Gastrocnemius medialis (tissue), 4 donors: ENCODE measurements at regions of chr11 and their contacts with region 1.

Region 1: DNA sequence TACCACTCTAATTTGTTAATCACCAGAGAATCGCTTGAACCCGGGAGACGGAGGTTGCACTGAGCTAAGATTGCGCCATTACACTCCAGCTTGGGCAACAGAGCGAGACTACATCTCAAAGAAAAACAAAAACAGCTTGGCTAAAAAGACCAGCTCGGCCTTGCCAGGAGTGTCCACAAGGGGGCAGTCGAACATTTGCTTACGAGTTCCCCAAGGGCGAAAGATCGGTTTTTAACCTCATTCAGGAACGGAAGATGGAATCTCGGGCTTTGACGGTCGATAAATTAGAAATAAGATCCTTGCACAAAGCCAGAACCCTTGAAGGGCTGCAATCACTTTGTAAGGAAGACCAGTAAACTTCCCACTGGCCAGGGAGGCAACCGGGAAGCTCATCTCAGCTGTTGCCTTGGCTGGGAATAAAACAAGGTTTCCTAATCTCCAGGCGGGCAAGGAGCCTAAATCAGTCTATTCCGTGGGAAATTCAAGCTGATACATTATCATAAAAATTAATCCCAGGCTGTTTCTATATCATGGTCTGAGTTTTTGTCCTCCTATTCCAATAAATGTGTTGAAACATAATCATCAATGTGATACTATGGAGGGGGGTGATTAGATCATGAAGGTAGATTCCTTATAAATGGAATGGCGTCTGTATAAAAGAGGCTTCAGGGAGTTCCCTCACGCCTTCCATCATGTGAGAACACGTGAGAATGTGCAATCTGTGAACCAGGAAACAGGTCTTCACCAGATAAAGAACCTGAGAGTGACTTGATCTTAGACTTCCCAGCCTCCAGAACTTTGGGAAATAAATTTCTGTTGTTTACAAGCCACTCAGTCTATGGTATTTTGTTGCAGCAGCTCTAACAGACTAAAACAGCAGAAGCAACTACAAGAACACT is 14.9 kb upstream of the SLC29A2 start:
- DNase-seq: peak; percentile 71 to 90
- ATAC-seq: peak; percentile 77 to 87
- H3K4me3 ChIP-seq: peak overlapping the region; percentile 27 to 49 (median 35)
- H3K27ac ChIP-seq: peak overlapping the region; percentile 79 to 86 (median 81)
- H3K4me1 ChIP-seq: peaks cover 8% of the 10 kb centered on the region in 2 donors
- H3K27me3 ChIP-seq: no peaks in the 10 kb centered on the region
- CTCF ChIP-seq: peak; percentile 81 to 96 (median 93)
- POLR2A ChIP-seq: no peak

Region 2: GRCh38 chr11:66302656-66303055 is 83.8 kb before region 1 on chr11:
- in situ Hi-C with region 1: loop called in 2 of 4 experiments (anchors 10 kb)
- intact Hi-C with region 1: no loop called
- DNase-seq: no peak
- ATAC-seq: no peak
- H3K4me3 ChIP-seq: no peak overlapping the region
- H3K27ac ChIP-seq: no peak overlapping the region
- H3K4me1 ChIP-seq: no peaks in the 10 kb centered on the region
- H3K27me3 ChIP-seq: no peaks in the 10 kb centered on the region
- CTCF ChIP-seq: no peak
- POLR2A ChIP-seq: no peak

Region 3: GRCh38 chr11:66311965-66312548 is 74.4 kb before region 1 on chr11:
- in situ Hi-C with region 1: loop called in 2 of 4 experiments (anchors 10 kb)
- intact Hi-C with region 1: loop called (anchors 1 kb)
- DNase-seq: peak; percentile 86 to 88
- ATAC-seq: peak; percentile 80 to 82
- H3K4me3 ChIP-seq: peak overlapping the region; percentile 68 to 79 (median 72)
- H3K27ac ChIP-seq: peak overlapping the region; percentile 72 to 84 (median 80)
- H3K4me1 ChIP-seq: no peaks in the 10 kb centered on the region
- H3K27me3 ChIP-seq: peaks cover 5 to 14% (median 12%) of the 10 kb centered on the region in 3 donors
- CTCF ChIP-seq: peak in 4 of 5 experiments; percentile 89 to 96 (median 92)
- POLR2A ChIP-seq: peak; percentile 28 to 68

Region 4: GRCh38 chr11:66328307-66329144 is 57.9 kb before region 1 on chr11:
- in situ Hi-C with region 1: loop called in 1 of 4 experiments (anchors 5 kb)
- intact Hi-C with region 1: loop called (anchors 1 kb)
- DNase-seq: peak in 1 of 2 donors; percentile 54
- ATAC-seq: peak; percentile 65 to 76
- H3K4me3 ChIP-seq: peak overlapping the region in 1 of 4 donors; percentile 26
- H3K27ac ChIP-seq: peak overlapping the region in 3 of 4 donors; percentile 8 to 59 (median 21)
- H3K4me1 ChIP-seq: peaks cover 9 to 20% of the 10 kb centered on the region in 2 donors
- H3K27me3 ChIP-seq: no peaks in the 10 kb centered on the region
- CTCF ChIP-seq: peak; percentile 81 to 96 (median 93)
- POLR2A ChIP-seq: no peak

Region 5: DNA sequence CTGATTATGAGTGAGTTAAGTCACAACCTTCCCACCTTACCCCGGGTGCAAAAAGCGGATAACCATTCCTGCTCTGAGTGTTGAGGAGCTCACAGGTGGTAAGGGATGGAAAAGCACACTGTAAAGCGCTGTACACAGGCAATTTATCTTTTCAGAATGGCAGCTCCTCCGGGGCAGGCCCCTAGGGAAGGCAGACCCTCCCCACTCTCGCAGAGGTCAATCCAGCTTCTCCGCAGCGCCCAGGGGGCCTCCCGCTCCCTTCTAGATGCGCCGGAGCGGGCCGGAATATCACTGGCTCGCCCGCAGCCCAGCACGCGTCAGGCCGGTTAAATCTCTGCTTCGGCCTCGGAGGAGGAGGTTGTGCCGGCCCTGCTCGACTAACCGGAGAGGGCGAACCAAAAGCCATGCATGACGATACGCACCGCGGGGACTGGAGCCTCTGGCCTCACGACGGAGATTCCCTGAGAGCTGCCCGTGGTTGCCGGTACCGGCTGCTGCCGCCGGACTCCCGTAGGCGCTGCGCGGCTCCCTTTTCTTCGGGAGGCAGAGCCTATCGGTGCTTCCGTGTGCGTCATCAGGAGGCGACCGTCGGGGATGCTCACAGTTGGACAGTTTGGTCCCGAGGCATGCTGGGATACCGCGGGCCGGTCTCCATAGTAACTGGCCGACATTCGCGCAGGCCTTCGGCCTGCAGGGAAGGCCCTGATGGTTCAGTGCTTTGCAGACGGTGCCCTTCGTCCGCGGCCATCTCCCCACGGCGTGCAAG is 41.7 kb before region 1 on chr11 and contains the start of gene BRMS1:
- in situ Hi-C with region 1: no loop called
- intact Hi-C with region 1: loop called (anchors 1 kb)
- DNase-seq: peak; percentile 98
- ATAC-seq: peak; percentile 83 to 86
- H3K4me3 ChIP-seq: peak within 1 kb of the TSS; percentile 83 to 97 (median 93)
- H3K27ac ChIP-seq: peak within 1 kb of the TSS; percentile 80 to 91 (median 87)
- H3K4me1 ChIP-seq: peaks cover 35 to 36% of the 10 kb centered on the region in 2 donors
- H3K27me3 ChIP-seq: no peaks in the 10 kb centered on the region
- CTCF ChIP-seq: peak in 4 of 5 experiments; percentile 35 to 57 (median 48)
- POLR2A ChIP-seq: peak; percentile 92 to 96
- total RNA-seq, gene BRMS1: 40.1 to 73.5 (median 64.8) TPM

Region 6: DNA sequence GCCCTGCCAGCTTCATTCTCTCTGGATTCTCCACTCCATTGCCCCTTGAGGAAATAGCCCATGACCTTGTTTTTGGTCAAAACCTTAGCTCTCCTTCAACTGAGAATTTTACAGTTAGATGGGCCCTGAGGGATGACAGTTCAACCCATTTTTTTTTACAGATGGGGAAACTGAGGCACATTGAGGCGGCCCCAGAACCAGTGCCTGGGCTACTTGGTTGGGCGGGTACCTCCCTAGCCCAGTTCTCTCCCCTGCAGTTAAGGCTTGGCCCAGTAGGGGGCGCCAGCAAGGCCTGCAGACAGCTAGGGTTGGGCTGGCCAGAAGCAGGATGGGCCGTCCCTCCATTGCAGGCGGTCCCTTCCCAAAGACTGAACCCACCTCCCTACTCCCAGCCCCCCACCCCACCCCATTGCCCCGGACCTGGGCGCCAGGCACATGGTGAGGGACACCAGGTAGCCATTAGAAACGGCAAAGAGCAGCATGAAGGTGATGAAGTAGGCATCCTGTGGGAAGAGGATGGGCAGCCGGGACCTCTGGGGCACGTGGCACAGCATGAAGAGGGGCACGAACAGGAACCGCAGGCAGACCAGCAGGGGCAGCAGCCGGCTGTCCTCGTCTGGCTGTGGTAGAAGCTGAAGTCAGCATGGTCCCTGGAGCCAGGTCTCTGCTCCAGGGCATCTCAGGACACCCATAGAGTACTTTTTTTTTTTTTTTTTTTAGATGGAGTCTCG is 22.4 kb before region 1 on chr11:
- in situ Hi-C with region 1: no loop called
- intact Hi-C with region 1: loop called (anchors 1 kb)
- DNase-seq: peak in 1 of 2 donors; percentile 65
- ATAC-seq: peak in 1 of 2 donors; percentile 35
- H3K4me3 ChIP-seq: no peak overlapping the region
- H3K27ac ChIP-seq: peak overlapping the region; percentile 60 to 98 (median 60)
- H3K4me1 ChIP-seq: peaks cover 27% of the 10 kb centered on the region in 2 donors
- H3K27me3 ChIP-seq: no peaks in the 10 kb centered on the region
- CTCF ChIP-seq: peak; percentile 57 to 82 (median 73)
- POLR2A ChIP-seq: no peak

Region 7: DNA sequence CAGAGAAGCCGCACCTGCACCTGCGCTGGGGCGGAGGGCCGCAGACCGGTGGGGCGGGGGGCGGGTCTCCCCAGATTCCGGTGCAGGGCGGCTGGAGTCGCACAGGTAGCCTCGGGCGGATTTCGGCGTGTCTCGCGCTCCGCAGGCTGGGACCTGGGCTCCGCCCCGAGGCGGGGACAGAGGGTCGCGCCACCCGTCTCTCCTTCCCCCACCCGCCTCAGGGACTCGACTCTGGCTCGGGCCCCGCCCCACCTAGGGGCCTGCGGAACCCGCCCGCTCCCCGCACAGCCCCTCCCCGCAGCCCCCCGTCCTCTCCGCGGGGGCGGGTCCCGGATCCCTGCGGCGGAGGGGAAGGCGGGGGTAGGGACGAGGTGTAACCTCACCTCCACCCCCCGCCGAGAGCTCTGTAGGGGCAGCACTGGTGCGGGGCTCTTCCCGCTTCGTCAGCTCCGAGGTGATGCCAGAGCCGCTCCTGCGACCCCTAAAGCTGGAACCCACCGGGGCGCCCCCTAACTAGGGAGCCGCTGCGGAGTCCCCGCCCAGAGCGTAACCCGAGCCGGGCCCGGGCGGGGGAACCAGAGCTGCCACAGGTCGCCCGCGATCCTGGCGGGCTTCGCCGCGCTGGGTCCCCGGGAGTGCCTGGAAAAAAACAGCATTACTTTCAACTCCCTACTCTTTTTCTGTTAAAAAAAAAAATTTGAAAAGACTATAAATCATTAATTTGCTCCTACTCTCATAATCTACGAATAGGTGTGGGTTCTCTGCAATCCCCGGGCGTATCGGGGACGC is 14.6 kb before region 1 on chr11 and contains the start of gene SLC29A2:
- in situ Hi-C with region 1: no loop called
- intact Hi-C with region 1: loop called (anchors 2 kb)
- DNase-seq: peak; percentile 73 to 87
- ATAC-seq: peak; percentile 34 to 35
- H3K4me3 ChIP-seq: peak within 1 kb of the TSS; percentile 73 to 96 (median 78)
- H3K27ac ChIP-seq: peak within 1 kb of the TSS; percentile 97 to 99 (median 98)
- H3K4me1 ChIP-seq: peaks cover 48 to 58% of the 10 kb centered on the region in 2 donors
- H3K27me3 ChIP-seq: no peaks in the 10 kb centered on the region
- CTCF ChIP-seq: no peak
- POLR2A ChIP-seq: peak; percentile 56 to 69
- total RNA-seq, gene SLC29A2: 39.2 to 106 (median 70.6) TPM

Region 8: DNA sequence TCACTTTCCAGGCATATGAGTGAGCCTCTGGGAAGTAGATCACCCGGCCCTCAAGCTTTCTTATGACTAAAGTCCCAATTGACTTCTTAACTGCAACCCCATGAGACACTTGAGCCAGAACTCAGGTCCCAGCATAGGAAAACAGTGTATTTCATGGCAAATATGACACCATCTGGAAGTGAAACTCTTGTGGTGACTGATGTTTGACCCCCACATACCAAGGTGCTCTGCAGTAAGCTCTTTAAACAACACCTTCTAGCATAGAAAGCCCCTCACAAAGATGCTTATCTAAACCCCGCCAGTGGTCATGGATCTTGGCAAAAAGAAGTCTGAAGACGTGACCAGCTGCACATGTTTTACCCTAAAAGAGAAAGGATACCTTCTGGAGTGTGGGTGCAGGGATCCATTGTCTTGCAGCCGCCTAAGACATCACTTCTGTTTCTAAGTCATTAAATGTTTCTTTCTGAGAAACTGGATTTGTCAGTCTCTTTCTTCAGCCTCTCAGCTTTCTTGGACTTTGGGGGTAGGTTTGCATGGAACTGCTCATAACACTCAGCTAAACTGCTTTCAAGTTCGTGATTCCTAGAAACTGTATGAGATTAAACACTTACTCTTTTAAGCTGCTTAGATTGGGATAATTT is 72.8 kb after region 1 on chr11:
- in situ Hi-C with region 1: no loop called
- intact Hi-C with region 1: no loop called
- DNase-seq: no peak
- ATAC-seq: no peak
- H3K4me3 ChIP-seq: no peak overlapping the region
- H3K27ac ChIP-seq: no peak overlapping the region
- H3K4me1 ChIP-seq: no peaks in the 10 kb centered on the region
- H3K27me3 ChIP-seq: no peaks in the 10 kb centered on the region
- CTCF ChIP-seq: no peak
- POLR2A ChIP-seq: no peak

Region 9: DNA sequence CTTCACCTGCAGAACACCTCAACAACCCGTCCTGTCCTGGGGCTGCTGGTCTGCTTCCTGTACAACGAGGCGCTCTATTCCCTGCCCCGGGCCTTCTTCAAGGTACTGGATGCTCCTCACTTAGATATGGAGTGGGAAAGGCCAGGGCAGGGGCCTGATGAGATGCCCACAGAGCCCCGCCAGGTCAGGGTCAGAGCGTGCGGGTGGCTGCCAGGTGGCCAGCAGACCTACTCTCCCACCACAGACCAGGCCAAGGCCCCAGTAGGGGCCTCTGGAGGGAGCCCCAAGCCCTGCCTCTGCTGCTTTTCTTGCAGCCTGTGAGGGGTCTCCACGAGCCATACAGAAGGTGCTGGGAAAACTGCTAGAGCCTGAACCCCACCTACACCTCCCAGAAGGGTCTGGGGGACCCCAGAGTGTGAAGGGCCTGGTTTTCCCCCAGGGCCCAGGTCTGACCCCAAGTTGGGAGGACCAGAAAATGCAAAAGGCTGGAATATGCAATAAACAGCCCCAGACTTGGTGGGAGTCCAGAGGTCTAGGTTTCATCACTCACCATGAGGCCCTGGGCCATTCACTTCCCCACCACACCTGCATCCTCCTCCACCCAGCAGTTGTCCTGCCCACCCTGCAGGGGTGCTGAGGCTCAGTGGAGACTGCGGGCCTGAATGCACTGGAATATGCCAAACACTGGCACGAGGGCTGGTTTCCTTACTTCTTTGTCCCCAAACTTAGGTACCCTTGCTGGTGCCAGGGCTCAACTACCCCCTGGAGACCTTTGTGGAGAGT is 144.7 kb after region 1 on chr11:
- in situ Hi-C with region 1: no loop called
- intact Hi-C with region 1: no loop called
- DNase-seq: no peak
- ATAC-seq: no peak
- H3K4me3 ChIP-seq: no peak overlapping the region
- H3K27ac ChIP-seq: no peak overlapping the region
- H3K4me1 ChIP-seq: no peaks in the 10 kb centered on the region
- H3K27me3 ChIP-seq: no peaks in the 10 kb centered on the region
- CTCF ChIP-seq: no peak
- POLR2A ChIP-seq: no peak